ENCODE measurements at regions of chr1 and their contacts with region 1.

Region 1: DNA sequence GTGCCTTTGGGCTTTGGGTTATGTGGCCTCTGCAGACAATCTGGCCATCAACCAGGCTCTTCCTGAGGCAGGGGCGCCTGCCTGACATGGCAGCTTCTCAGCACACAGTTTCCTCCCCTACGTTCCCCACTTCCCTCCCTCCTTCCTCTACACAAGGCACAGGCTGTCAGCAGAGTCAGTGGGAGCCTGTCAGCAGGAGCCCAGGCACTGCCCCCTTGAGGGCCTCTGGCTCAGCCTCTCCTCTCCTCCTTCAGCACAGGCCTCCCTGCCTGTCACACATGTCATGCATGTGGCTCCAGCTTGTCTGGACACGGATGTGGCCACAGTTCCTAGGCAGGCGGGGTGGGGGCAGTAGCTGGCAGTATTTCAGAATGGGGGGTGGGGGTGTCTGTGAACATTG is 52.2 kb upstream of the ARTN start:
- DNase-seq: peak in 1 of 2 donors; percentile 27
- ATAC-seq: peak in 7 of 8 donors; percentile 47 to 76 (median 68)
- H3K4me3 ChIP-seq: no peak overlapping the region
- H3K27ac ChIP-seq: peak overlapping the region; percentile 54 to 82 (median 76)
- H3K4me1 ChIP-seq: peaks cover 0 to 28% (median 11%) of the 10 kb centered on the region in 9 donors
- H3K27me3 ChIP-seq: no peaks in the 10 kb centered on the region
- CTCF ChIP-seq: peak in 4 of 9 donors; percentile 11 to 30 (median 18)

Region 2: GRCh38 chr1:43729816-43730463 is 151.5 kb before region 1 on chr1:
- intact Hi-C with region 1: no loop called
- DNase-seq: no peak
- ATAC-seq: no peak
- H3K4me3 ChIP-seq: no peak overlapping the region
- H3K27ac ChIP-seq: no peak overlapping the region
- H3K4me1 ChIP-seq: peaks cover 0 to 10% (median 0%) of the 10 kb centered on the region in 9 donors
- H3K27me3 ChIP-seq: no peaks in the 10 kb centered on the region
- CTCF ChIP-seq: no peak

Region 3: DNA sequence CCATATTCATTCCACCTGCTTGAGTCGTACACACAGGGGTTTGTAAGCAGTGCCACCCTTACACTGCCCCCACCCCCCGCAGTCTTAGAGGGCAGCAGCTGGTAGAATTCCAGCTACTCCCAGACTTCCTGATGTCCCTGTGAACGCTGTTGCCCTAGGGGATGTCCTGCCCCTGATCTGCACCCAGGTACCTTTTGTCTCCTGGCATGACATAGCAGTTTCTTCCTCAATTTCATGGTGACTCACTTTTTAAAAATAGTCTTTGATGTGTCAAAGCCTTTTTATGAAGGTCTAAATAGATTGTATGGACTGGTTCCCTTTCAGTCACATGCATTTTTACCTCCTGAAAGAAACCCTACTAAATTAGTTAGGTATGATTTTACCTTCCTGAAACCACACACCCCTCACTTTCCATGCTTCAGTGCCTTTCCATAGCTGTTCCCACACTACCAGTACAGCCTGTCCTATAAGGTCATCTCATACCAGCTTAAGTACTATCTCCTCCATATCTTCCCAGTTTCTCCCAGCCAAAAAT is 97.7 kb before region 1 on chr1:
- intact Hi-C with region 1: loop called in 1 of 10 experiments (anchors 10 kb)
- DNase-seq: no peak
- ATAC-seq: peak in 6 of 8 donors; percentile 18 to 76 (median 54)
- H3K4me3 ChIP-seq: no peak overlapping the region
- H3K27ac ChIP-seq: peak overlapping the region in 1 of 10 donors; percentile 24
- H3K4me1 ChIP-seq: peaks cover 3 to 37% (median 31%) of the 10 kb centered on the region in 9 donors
- H3K27me3 ChIP-seq: no peaks in the 10 kb centered on the region
- CTCF ChIP-seq: no peak

Region 4: DNA sequence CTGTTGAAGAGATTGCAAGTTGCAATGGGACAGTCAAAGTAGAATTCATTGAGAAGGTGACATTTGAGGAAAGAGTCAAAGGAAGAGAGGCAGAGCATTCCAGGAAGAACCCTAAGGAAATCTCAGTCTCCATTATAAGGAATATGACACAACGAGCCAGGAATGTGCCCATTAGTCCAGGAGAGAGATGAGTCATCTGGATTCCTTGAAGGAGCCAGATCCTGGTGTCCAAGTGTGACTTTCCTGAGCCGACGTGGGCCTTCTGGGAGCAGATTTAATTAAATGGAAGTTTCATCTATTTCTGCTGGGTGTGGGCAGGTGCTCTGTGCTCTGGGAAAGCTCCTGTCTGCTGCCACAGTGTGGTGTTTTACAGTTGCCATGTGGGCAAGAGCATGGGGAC is 59.4 kb before region 1 on chr1:
- intact Hi-C with region 1: loop called in 1 of 10 experiments (anchors 10 kb)
- DNase-seq: no peak
- ATAC-seq: peak in 6 of 8 donors; percentile 25 to 89 (median 65)
- H3K4me3 ChIP-seq: no peak overlapping the region
- H3K27ac ChIP-seq: peak overlapping the region in 2 of 10 donors; percentile 11 to 26
- H3K4me1 ChIP-seq: peaks cover 0 to 24% (median 17%) of the 10 kb centered on the region in 9 donors
- H3K27me3 ChIP-seq: no peaks in the 10 kb centered on the region
- CTCF ChIP-seq: no peak

Measured in heart right ventricle (tissue), 16 donors.